ENCODE measurements at regions of chr10 and their contacts with region 1.

Region 1: DNA sequence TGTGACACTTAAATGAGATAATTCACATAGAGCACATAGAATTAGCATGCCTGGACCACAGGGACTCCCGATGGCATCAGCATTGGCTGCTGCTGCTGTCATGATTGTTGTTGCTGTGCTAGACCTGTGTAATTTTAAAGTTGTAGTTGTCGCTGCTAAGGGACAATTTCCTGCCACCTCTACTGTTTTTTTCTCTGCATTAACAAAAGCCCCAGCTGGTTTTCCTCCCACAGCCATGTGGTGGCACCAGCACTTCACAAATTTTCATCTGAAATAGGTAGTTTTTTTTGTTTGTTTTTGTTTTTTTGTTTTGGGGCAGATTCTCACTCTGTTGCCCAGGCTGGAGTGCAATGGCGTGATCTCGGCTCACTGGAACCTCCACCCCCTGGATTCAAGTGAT is 25.4 kb upstream of the PRXL2A start:
- DNase-seq: peak in 1 of 2 donors; percentile 41
- ATAC-seq: peak in 1 of 8 donors; percentile 57
- H3K4me3 ChIP-seq: no peak overlapping the region
- H3K27ac ChIP-seq: no peak overlapping the region
- H3K4me1 ChIP-seq: peaks cover 0 to 18% (median 3%) of the 10 kb centered on the region in 9 donors
- H3K27me3 ChIP-seq: no peaks in the 10 kb centered on the region
- CTCF ChIP-seq: peak; percentile 40 to 83 (median 74)

Region 2: GRCh38 chr10:80504158-80504811 is 121.3 kb after region 1 on chr10:
- intact Hi-C with region 1: loop called in 8 of 10 experiments (anchors 1 to 5 kb)
- DNase-seq: no peak
- ATAC-seq: peak in 6 of 8 donors; percentile 5 to 29 (median 18)
- H3K4me3 ChIP-seq: peak overlapping the region in 1 of 10 donors; percentile 1
- H3K27ac ChIP-seq: peak overlapping the region; percentile 6 to 92 (median 79)
- H3K4me1 ChIP-seq: peaks cover 46 to 100% (median 98%) of the 10 kb centered on the region in 9 donors
- H3K27me3 ChIP-seq: no peaks in the 10 kb centered on the region
- CTCF ChIP-seq: no peak

Region 3: DNA sequence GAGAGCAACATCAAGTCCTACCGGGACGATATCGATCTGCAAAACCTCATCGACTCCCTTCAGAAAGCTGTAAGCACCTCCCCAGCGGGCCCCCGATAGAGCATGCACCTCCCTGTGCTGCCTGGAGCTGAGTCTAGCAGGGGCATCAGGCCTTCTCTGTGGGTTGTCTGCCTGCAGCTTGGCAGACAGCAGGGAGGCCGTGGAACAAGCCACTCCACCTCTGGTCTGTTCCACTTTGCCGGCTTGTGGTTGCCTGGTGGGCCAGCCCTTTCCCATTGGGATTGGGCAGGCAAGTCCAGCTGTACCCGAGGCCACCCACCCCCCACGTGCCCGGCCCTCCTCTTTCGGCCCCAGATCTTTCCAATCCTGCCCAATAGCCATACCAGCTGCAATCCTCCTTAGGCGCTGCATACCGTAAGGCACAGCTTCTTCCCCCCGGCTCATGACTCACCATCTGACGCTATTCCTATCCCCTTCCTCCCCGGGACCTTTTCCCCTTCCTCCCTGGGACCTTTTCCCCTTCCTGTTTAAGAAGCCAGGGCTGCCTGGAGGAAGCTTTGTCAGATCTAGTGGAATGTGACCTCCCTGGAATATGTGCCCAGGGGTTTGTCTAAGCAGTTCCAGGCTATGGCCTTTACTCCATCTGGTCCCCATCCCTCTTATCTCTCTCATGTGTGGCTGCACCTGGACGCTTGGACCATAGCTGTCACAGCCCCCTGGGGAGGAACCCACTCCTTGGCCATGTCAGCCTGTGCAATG is 126.6 kb after region 1 on chr10:
- intact Hi-C with region 1: loop called in 7 of 10 experiments (anchors 1 to 5 kb)
- DNase-seq: peak in 1 of 2 donors; percentile 73
- ATAC-seq: peak; percentile 53 to 86 (median 76)
- H3K4me3 ChIP-seq: peak overlapping the region in 1 of 10 donors; percentile 19
- H3K27ac ChIP-seq: peak overlapping the region; percentile 63 to 87 (median 76)
- H3K4me1 ChIP-seq: peaks cover 20 to 76% (median 67%) of the 10 kb centered on the region in 9 donors
- H3K27me3 ChIP-seq: no peaks in the 10 kb centered on the region
- CTCF ChIP-seq: no peak

Region 4: GRCh38 chr10:80662577-80663261 is 279.7 kb after region 1 on chr10:
- intact Hi-C with region 1: loop called in 1 of 10 experiments (anchors 10 kb)
- DNase-seq: peak; percentile 79 to 85
- ATAC-seq: peak; percentile 78 to 94 (median 90)
- H3K4me3 ChIP-seq: peak overlapping the region in 7 of 10 donors; percentile 14 to 49 (median 42)
- H3K27ac ChIP-seq: peak overlapping the region in 9 of 10 donors; percentile 24 to 85 (median 71)
- H3K4me1 ChIP-seq: peaks cover 0 to 46% (median 6%) of the 10 kb centered on the region in 9 donors
- H3K27me3 ChIP-seq: peaks cover 0 to 5% (median 0%) of the 10 kb centered on the region in 7 donors
- CTCF ChIP-seq: peak; percentile 79 to 93 (median 87)

Region 5: GRCh38 chr10:80924063-80924952 is 541.3 kb after region 1 on chr10:
- intact Hi-C with region 1: loop called in 5 of 10 experiments (anchors 5 to 10 kb)
- DNase-seq: peak in 1 of 2 donors; percentile 51
- ATAC-seq: peak in 3 of 8 donors; percentile 42 to 65 (median 43)
- H3K4me3 ChIP-seq: no peak overlapping the region
- H3K27ac ChIP-seq: no peak overlapping the region
- H3K4me1 ChIP-seq: no peaks in the 10 kb centered on the region
- H3K27me3 ChIP-seq: peaks cover 0 to 19% (median 0%) of the 10 kb centered on the region in 7 donors
- CTCF ChIP-seq: peak; percentile 48 to 84 (median 74)